ENCODE measurements at regions of chr2 and their contacts with region 1.

Region 1: GRCh38 chr2:108351889-108352288 is 25.9 kb upstream of the SULT1C4 start:
- DNase-seq: no peak
- ATAC-seq: no peak
- H3K4me3 ChIP-seq: no peak overlapping the region
- H3K4me1 ChIP-seq: no peaks in the 10 kb centered on the region
- CTCF ChIP-seq: no peak

Region 2: GRCh38 chr2:108460345-108461037 is 108.6 kb after region 1 on chr2:
- intact Hi-C with region 1: loop called in 1 of 2 experiments (anchors 10 kb)
- DNase-seq: no peak
- ATAC-seq: peak; percentile 79
- H3K4me3 ChIP-seq: no peak overlapping the region
- H3K4me1 ChIP-seq: peaks cover 9% of the 10 kb centered on the region
- CTCF ChIP-seq: no peak

Region 3: GRCh38 chr2:108583903-108584520 is 232.1 kb after region 1 on chr2:
- intact Hi-C with region 1: loop called in 1 of 2 experiments (anchors 10 kb)
- DNase-seq: peak in 1 of 3 donors; percentile 87
- ATAC-seq: peak; percentile 90
- H3K4me3 ChIP-seq: no peak overlapping the region
- H3K4me1 ChIP-seq: peaks cover 9% of the 10 kb centered on the region
- CTCF ChIP-seq: peak; percentile 59

Region 4: DNA sequence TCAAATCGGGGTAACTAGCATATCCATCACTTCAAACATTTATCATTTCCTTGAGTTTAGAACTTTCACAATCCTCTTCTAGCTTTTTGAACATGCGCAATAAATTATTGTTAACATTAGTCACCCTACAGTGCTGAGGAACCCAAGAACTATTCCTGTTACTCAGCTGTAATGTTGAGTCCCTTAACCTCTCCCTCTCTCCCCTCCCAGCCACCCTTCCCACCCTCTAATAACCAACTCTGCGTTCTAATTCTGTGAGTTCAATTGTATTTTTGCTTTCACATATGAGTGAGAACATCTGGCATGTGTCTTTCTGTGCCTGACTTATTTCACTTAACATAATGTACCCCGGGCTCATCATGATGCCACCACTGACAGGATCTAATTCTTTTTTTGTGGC is 288.8 kb after region 1 on chr2:
- intact Hi-C with region 1: no loop called
- DNase-seq: no peak
- ATAC-seq: no peak
- H3K4me3 ChIP-seq: no peak overlapping the region
- H3K4me1 ChIP-seq: peaks cover 12% of the 10 kb centered on the region
- CTCF ChIP-seq: no peak

Region 5: GRCh38 chr2:109155553-109156451 is 803.9 kb after region 1 on chr2:
- intact Hi-C with region 1: no loop called
- DNase-seq: no peak
- ATAC-seq: no peak
- H3K4me3 ChIP-seq: no peak overlapping the region
- H3K4me1 ChIP-seq: peaks cover 3% of the 10 kb centered on the region
- CTCF ChIP-seq: no peak

Measured in mucosa of descending colon (tissue), 3 donors.